Activated CD4-positive, alpha-beta T cell treated with anti-CD3 and anti-CD28 coated beads for 36 hours (primary cell): ENCODE measurements at regions of chr19 and their contacts with region 1.

Region 1: DNA sequence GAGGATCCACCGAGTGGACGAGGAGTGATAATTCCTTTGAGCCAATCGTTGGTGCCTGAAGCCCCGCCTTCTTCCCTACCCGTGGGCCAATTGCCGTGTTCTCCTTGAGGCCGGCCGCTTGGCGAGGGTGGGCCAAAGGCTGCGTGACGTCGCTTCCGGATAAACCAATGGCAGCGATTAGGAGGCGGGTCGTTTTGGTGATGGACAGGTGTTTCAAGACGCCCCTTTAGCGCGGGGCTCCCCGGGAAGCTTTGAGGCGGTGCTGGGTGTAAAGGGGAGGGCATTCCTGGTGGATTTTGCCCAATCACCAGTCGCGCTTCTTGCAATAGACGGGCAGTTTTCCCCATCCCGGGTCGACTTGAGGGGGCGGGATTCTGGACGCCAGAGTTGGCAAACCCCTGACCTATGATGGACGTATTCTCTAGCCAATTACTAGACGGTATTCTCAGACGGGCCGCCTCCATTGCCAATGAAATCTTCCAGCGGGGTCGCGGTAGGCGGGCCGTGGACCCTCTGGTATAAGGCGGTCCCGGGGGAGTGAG is 310 bp upstream of the PRMT1 start:
- DNase-seq: peak; percentile 100
- ATAC-seq: peak; percentile 77
- H3K4me3 Mint-ChIP-seq: peak overlapping the region; percentile 94
- H3K27ac Mint-ChIP-seq: peak overlapping the region; percentile 99
- H3K4me1 Mint-ChIP-seq: peaks cover 39% of the 10 kb centered on the region
- H3K27me3 Mint-ChIP-seq: no peaks in the 10 kb centered on the region

Region 2: GRCh38 chr19:48637170-48637947 is 1039.4 kb before region 1 on chr19 and contains the start of gene DBP:
- CTCF ChIA-PET with region 1: no interaction called
- POLR2A ChIA-PET with region 1: no interaction called
- intact Hi-C with region 1: loop called in 1 of 2 experiments (anchors 2 kb)
- DNase-seq: peak; percentile 98
- ATAC-seq: peak; percentile 75
- H3K4me3 Mint-ChIP-seq: peak within 1 kb of the TSS; percentile 83
- H3K27ac Mint-ChIP-seq: peak within 1 kb of the TSS; percentile 99
- H3K4me1 Mint-ChIP-seq: peaks cover 55% of the 10 kb centered on the region
- H3K27me3 Mint-ChIP-seq: no peaks in the 10 kb centered on the region
- total RNA-seq, gene DBP: 8.3 to 12.4 TPM

Region 3: GRCh38 chr19:49451430-49452181 is 225.2 kb before region 1 on chr19 and contains the start of gene PIH1D1:
- CTCF ChIA-PET with region 1: interaction called, 3 read pairs
- POLR2A ChIA-PET with region 1: interaction called, 3 read pairs
- intact Hi-C with region 1: loop called in 1 of 2 experiments (anchors 1 kb)
- DNase-seq: peak; percentile 98
- ATAC-seq: peak; percentile 71
- H3K4me3 Mint-ChIP-seq: peak within 1 kb of the TSS; percentile 100
- H3K27ac Mint-ChIP-seq: peak within 1 kb of the TSS; percentile 100
- H3K4me1 Mint-ChIP-seq: peaks cover 50% of the 10 kb centered on the region
- H3K27me3 Mint-ChIP-seq: no peaks in the 10 kb centered on the region
- total RNA-seq, gene PIH1D1: 117 to 138 TPM

Region 4: GRCh38 chr19:49502866-49503581 is 173.7 kb before region 1 on chr19:
- CTCF ChIA-PET with region 1: interaction called, 6 read pairs
- POLR2A ChIA-PET with region 1: interaction called, 4 read pairs
- intact Hi-C with region 1: loop called in 1 of 2 experiments (anchors 1 kb)
- DNase-seq: peak; percentile 65
- ATAC-seq: peak; percentile 28
- H3K4me3 Mint-ChIP-seq: no peak overlapping the region
- H3K27ac Mint-ChIP-seq: no peak overlapping the region
- H3K4me1 Mint-ChIP-seq: peaks cover 44% of the 10 kb centered on the region
- H3K27me3 Mint-ChIP-seq: no peaks in the 10 kb centered on the region

Region 5: GRCh38 chr19:49590071-49590970 is 86.4 kb before region 1 on chr19:
- CTCF ChIA-PET with region 1: interaction called, 4 read pairs
- POLR2A ChIA-PET with region 1: no interaction called
- intact Hi-C with region 1: loop called (anchors 1 to 2 kb)
- DNase-seq: peak; percentile 98
- ATAC-seq: peak; percentile 80
- H3K4me3 Mint-ChIP-seq: peak overlapping the region; percentile 79
- H3K27ac Mint-ChIP-seq: peak overlapping the region; percentile 84
- H3K4me1 Mint-ChIP-seq: peaks cover 28% of the 10 kb centered on the region
- H3K27me3 Mint-ChIP-seq: no peaks in the 10 kb centered on the region

Region 6: GRCh38 chr19:49766007-49766937 is 89.5 kb after region 1 on chr19:
- CTCF ChIA-PET with region 1: interaction called, 3 read pairs
- POLR2A ChIA-PET with region 1: no interaction called
- intact Hi-C with region 1: loop called (anchors 1 kb)
- DNase-seq: peak; percentile 99
- ATAC-seq: peak; percentile 93
- H3K4me3 Mint-ChIP-seq: peak overlapping the region; percentile 94
- H3K27ac Mint-ChIP-seq: peak overlapping the region; percentile 93
- H3K4me1 Mint-ChIP-seq: peaks cover 36% of the 10 kb centered on the region
- H3K27me3 Mint-ChIP-seq: no peaks in the 10 kb centered on the region

Region 7: GRCh38 chr19:49929611-49930482 is 253.1 kb after region 1 on chr19:
- CTCF ChIA-PET with region 1: no interaction called
- POLR2A ChIA-PET with region 1: interaction called, 3 read pairs
- intact Hi-C with region 1: loop called in 1 of 2 experiments (anchors 1 kb)
- DNase-seq: peak; percentile 97
- ATAC-seq: peak; percentile 91
- H3K4me3 Mint-ChIP-seq: peak overlapping the region; percentile 96
- H3K27ac Mint-ChIP-seq: peak overlapping the region; percentile 98
- H3K4me1 Mint-ChIP-seq: peaks cover 59% of the 10 kb centered on the region
- H3K27me3 Mint-ChIP-seq: no peaks in the 10 kb centered on the region